Activated CD8-positive, alpha-beta memory T cell treated with anti-CD3 and anti-CD28 coated beads, Interleukin-2, amount 10 ng/mL, durations not matched to agents 7 days and 5 days (primary cell): ENCODE measurements at regions of chr11 and their contacts with region 1.

Region 1: GRCh38 chr11:67409261-67409666 is 5.4 kb downstream of the TBC1D10C start:
- DNase-seq: peak; percentile 95
- ATAC-seq: peak; percentile 67
- H3K4me3 Mint-ChIP-seq: peak overlapping the region; percentile 90
- H3K27ac Mint-ChIP-seq: peak overlapping the region; percentile 92
- H3K4me1 Mint-ChIP-seq: peaks cover 72% of the 10 kb centered on the region
- H3K27me3 Mint-ChIP-seq: no peaks in the 10 kb centered on the region

Region 2: GRCh38 chr11:67420646-67421420 is 11.6 kb after region 1 on chr11:
- CTCF ChIA-PET with region 1: interaction called, 88 read pairs
- DNase-seq: peak; percentile 98
- ATAC-seq: peak; percentile 93
- H3K4me3 Mint-ChIP-seq: peak overlapping the region; percentile 63
- H3K27ac Mint-ChIP-seq: peak overlapping the region; percentile 81
- H3K4me1 Mint-ChIP-seq: peaks cover 43% of the 10 kb centered on the region
- H3K27me3 Mint-ChIP-seq: peaks cover 7% of the 10 kb centered on the region

Region 3: GRCh38 chr11:67428052-67428914 is 19.0 kb after region 1 on chr11 and contains the start of gene RPS6KB2:
- CTCF ChIA-PET with region 1: interaction called, 96 read pairs
- DNase-seq: peak; percentile 100
- ATAC-seq: peak; percentile 91
- H3K4me3 Mint-ChIP-seq: peak within 1 kb of the TSS; percentile 94
- H3K27ac Mint-ChIP-seq: peak within 1 kb of the TSS; percentile 95
- H3K4me1 Mint-ChIP-seq: peaks cover 51% of the 10 kb centered on the region
- H3K27me3 Mint-ChIP-seq: no peaks in the 10 kb centered on the region
- total RNA-seq, gene RPS6KB2: 63.3 to 65.0 TPM

Region 4: DNA sequence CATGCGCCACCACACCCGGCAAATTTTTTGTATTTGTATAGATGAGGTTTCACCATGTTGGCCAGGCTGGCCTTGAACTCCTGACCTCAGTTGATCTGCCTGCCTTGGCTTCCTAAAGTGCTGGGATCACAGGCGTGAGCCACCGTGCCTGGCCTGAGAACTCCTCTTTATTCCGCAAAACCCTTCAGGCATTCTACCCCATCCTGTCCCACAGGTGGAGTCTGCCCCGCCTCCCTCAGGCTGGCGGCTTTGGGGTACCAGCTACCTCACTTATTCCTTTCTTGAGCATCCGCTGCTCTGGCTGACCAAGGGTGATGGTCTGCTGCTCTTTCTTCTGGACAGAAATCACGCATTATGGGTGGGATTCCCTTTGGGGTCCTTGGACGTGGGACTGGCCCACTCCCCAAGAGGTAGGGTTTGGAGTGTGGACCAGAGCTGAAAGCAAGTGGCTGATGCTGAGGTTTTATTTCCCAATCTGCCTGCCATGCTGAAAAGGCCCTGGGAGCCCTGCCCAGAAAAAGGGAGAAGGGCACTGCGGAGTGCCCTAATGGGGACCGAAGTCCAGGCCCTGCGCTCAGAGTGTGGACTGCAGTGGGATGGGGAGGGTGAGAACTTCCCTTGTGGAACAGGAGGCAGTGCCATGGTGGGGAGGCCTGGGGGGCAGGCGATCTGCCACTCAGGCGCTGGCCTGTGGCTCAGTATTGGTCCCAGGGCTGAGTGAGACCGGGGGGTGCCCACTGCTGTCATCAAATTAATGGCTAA is 38.8 kb after region 1 on chr11:
- CTCF ChIA-PET with region 1: no interaction called
- DNase-seq: no peak
- ATAC-seq: no peak
- H3K4me3 Mint-ChIP-seq: no peak overlapping the region
- H3K27ac Mint-ChIP-seq: no peak overlapping the region
- H3K4me1 Mint-ChIP-seq: peaks cover 55% of the 10 kb centered on the region
- H3K27me3 Mint-ChIP-seq: peaks cover 2% of the 10 kb centered on the region

Region 5: GRCh38 chr11:67492801-67493547 is 83.7 kb after region 1 on chr11:
- CTCF ChIA-PET with region 1: no interaction called
- DNase-seq: peak; percentile 45
- ATAC-seq: no peak
- H3K4me3 Mint-ChIP-seq: no peak overlapping the region
- H3K27ac Mint-ChIP-seq: no peak overlapping the region
- H3K4me1 Mint-ChIP-seq: peaks cover 14% of the 10 kb centered on the region
- H3K27me3 Mint-ChIP-seq: no peaks in the 10 kb centered on the region